ENCODE measurements at regions of chr9 and their contacts with region 1.

Region 1: GRCh38 chr9:96317335-96317980 is 15.5 kb upstream of the HSD17B3 start:
- DNase-seq: peak; percentile 81
- H3K27ac ChIP-seq: no peak overlapping the region
- CTCF ChIP-seq: peak; percentile 99

Region 2: DNA sequence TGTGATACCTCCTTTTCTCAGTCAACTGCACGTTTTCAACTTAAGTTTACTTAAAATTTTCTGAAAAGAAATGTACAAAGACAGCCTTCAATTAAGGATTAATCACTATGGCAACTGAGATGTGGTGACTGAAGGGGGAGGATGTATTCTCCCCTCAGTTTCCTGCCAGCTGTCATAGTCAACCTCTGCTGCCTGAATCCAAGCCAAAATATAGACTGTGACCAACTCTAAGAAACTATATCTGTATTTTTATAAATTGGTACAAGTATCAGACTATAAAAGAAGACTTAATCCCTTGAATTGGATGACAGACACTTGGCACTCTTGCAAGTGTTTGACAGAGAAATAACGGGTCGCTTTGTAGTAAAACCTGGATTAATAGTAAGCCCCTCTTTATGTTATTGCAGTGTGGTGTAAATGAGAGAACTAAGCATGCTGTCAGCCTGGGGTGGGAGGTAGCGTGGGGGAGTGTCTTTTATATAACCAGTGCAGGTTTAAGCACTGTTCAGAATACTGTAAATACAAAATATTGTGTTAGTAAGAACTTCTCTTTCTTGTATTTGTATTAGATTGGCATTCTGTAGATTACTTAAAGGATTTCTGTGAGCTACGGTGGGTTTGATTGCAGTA is 335.6 kb before region 1 on chr9:
- CTCF ChIA-PET with region 1: no interaction called
- POLR2A ChIA-PET with region 1: no interaction called
- DNase-seq: no peak
- H3K27ac ChIP-seq: no peak overlapping the region
- CTCF ChIP-seq: no peak

Region 3: GRCh38 chr9:96217754-96218693 is 99.4 kb before region 1 on chr9:
- CTCF ChIA-PET with region 1: interaction called, 10 read pairs
- POLR2A ChIA-PET with region 1: no interaction called
- DNase-seq: peak; percentile 92
- H3K27ac ChIP-seq: peak overlapping the region; percentile 48
- CTCF ChIP-seq: peak; percentile 100

Region 4: DNA sequence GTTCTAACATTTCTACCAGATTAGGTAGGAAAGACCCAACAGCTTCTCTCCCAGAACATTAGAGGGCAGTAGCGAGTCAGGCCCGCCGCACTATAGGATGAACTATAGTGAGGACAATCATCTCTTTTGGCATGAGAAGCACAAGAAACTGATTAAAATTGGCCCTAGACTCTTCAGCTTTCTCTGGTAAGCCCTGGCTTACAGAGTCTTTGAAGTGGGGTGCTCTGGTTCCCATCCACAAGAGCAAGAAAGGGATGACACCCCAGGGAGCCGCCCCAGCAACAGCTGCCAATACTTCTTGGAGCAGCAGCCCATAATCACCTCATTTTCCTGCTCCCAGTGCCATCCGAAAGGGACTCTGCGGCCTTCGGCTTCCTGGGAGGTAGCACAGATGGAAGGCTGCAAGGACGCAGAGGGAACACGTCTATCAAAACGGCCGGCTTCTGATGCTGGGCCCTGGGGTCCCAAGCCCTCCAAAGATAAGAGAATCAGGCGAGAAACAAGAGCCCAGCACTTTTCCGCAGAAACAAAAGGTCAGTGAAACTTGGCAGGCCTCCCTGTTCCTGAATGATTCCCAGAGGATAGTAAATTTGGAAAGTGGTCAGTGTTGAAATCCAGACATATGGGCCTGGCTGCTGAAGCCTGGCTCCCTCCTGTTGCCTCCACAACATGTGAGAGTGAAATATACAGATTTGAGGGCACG is 84.8 kb before region 1 on chr9:
- CTCF ChIA-PET with region 1: interaction called, 65 read pairs
- POLR2A ChIA-PET with region 1: no interaction called
- DNase-seq: peak; percentile 82
- H3K27ac ChIP-seq: no peak overlapping the region
- CTCF ChIP-seq: peak; percentile 99

Region 5: GRCh38 chr9:96241391-96241809 is 76.1 kb before region 1 on chr9:
- CTCF ChIA-PET with region 1: interaction called, 12 read pairs
- POLR2A ChIA-PET with region 1: no interaction called
- DNase-seq: peak; percentile 81
- H3K27ac ChIP-seq: no peak overlapping the region
- CTCF ChIP-seq: no peak

Region 6: GRCh38 chr9:96327694-96328352 is 10.4 kb after region 1 on chr9:
- CTCF ChIA-PET with region 1: interaction called, 11 read pairs
- POLR2A ChIA-PET with region 1: no interaction called
- DNase-seq: peak; percentile 74
- H3K27ac ChIP-seq: no peak overlapping the region
- CTCF ChIP-seq: peak; percentile 99

Region 7: GRCh38 chr9:96436063-96436455 is 118.6 kb after region 1 on chr9:
- CTCF ChIA-PET with region 1: no interaction called
- POLR2A ChIA-PET with region 1: no interaction called
- DNase-seq: no peak
- H3K27ac ChIP-seq: no peak overlapping the region
- CTCF ChIP-seq: no peak